ENCODE measurements at regions of chr6 and their contacts with region 1.

Region 1: DNA sequence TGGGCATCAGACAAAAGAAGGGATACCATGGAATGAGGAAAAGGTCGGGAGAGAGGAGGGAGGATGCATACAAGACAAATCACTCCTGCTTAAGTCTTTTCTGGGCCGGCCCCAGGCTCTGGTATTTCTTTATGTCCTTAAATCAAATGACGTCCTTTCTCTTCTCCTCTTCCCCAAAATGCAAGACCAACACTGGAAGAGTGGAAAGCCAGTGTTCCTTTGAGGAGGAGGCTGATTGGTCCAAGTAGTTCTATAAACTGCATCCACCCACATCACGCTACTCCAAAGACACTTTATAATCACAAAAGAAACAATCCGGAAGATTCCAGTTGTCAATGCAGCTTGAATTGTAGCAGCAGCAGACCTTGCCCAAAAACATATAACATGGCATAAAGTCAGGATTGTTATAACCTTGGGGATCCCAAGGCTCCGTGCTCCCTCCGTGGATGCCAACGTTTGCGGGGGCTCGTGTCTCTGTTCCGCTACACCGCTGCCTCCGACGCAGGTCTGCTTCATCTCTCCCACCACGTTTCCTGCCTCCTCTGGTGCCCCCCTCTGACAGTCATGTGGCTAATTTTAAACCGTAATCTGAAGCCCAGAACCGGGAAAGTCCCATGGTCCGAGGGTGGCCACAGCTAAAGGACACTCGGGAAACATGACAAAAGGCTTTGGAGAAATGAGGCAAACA is 47.1 kb downstream of the MCUR1 start:
- DNase-seq: peak; percentile 66 to 79
- H3K4me3 ChIP-seq: peak overlapping the region; percentile 33 to 51
- H3K27ac ChIP-seq: peak overlapping the region; percentile 42 to 48
- H3K4me1 ChIP-seq: peaks cover 0 to 36% (median 12%) of the 10 kb centered on the region in 4 donors
- H3K27me3 ChIP-seq: no peaks in the 10 kb centered on the region
- CTCF ChIP-seq: peak in 1 of 2 experiments; percentile 21

Region 2: DNA sequence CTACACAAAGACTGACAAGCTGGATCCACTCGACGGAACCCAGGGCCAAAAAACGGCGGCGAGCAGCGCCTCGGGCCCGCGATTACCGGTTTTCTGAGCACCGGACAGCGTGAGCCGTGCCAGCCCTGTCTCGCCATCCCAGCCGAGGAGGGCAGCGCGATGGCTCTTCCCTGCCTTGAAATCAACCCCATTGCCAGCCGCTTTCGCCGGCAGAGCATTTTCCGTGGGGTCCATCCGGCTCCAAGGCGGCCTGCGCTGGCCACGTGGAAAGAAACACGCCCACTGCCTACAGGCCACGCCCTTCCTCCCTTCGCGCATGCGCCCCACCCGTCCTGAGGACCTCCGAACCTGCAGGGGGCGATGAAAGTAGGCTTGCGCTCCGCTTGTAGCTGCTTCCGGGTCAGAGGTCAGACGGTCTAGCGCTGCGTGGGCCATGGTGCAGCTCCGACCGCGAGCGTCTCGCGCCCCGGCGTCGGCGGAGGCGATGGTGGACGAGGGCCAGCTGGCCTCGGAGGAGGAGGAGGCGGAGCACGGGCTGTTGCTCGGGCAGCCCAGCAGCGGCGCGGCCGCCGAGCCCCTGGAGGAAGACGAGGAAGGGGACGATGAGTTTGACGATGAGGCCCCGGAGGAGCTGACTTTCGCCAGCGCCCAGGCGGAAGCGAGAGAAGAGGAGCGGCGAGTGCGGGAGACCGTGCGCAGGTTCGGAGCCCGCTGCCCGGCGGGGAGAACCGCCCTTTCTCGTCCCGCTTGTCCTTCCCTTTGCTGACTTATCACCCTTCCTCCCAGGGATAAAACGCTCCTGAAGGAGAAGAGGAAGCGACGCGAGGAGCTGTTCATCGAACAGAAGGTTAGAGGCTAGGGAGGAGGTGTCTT is 152.1 kb before region 1 on chr6 and contains the start of gene NOL7:
- intact Hi-C with region 1: loop called (anchors 5 kb)
- DNase-seq: peak; percentile 96 to 98
- H3K4me3 ChIP-seq: peak within 1 kb of the TSS; percentile 75 to 95
- H3K27ac ChIP-seq: peak within 1 kb of the TSS; percentile 92 to 96
- H3K4me1 ChIP-seq: peaks cover 0 to 25% (median 16%) of the 10 kb centered on the region in 4 donors
- H3K27me3 ChIP-seq: no peaks in the 10 kb centered on the region
- CTCF ChIP-seq: peak; percentile 86 to 94

Region 3: GRCh38 chr6:13711733-13712598 is 55.3 kb before region 1 on chr6 and contains the start of gene RANBP9:
- intact Hi-C with region 1: loop called (anchors 10 kb)
- DNase-seq: peak; percentile 89 to 94
- H3K4me3 ChIP-seq: peak within 1 kb of the TSS; percentile 76 to 92
- H3K27ac ChIP-seq: peak within 1 kb of the TSS; percentile 92 to 96
- H3K4me1 ChIP-seq: peaks cover 0 to 23% (median 16%) of the 10 kb centered on the region in 4 donors
- H3K27me3 ChIP-seq: no peaks in the 10 kb centered on the region
- CTCF ChIP-seq: no peak